ENCODE measurements at regions of chr5 and their contacts with region 1.

Region 1: DNA sequence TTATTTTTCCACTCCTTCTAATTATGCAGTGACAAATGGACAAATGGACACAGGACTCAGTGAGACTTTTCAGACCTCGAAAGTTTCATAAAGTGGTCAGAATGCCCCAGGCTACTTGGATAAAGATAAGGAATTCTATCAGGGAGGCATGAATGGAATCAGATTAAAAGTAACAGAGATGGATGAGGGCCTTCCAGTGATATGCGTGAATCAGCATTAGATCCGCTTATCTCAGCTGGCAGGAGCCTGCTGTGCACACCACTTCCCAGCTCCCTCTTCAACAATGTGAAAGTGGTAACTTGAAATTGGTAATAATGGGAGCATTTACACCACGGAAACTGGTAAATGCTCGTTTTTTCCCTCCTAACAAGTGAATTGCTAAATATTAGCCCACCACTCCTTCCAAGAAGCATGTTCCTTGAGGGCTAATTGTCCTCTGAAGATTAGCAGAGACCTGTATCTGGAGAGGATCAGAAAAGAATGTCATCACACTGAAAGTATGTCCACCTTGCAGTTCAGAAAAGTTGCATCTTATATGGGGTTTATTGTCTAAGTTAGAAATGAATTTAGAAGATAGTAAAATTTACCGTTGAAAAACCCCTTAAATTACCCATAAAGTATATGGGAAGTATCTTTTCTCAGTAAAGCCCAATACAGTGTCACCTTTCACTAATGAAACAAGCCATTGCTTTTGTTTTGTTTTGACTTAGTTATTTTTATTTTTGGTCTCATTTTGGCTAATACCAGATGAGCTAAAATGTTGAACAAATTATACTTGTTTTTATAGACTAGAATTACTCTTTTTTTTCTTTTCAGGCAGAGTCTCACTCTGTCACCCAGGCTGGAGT is 125.3 kb downstream of the DPYSL3 start:
- DNase-seq: no peak
- H3K4me3 ChIP-seq: no peak overlapping the region
- H3K27ac ChIP-seq: no peak overlapping the region
- H3K4me1 ChIP-seq: no peaks in the 10 kb centered on the region
- H3K27me3 ChIP-seq: no peaks in the 10 kb centered on the region
- CTCF ChIP-seq: no peak
- POLR2A ChIP-seq: no peak

Region 2: DNA sequence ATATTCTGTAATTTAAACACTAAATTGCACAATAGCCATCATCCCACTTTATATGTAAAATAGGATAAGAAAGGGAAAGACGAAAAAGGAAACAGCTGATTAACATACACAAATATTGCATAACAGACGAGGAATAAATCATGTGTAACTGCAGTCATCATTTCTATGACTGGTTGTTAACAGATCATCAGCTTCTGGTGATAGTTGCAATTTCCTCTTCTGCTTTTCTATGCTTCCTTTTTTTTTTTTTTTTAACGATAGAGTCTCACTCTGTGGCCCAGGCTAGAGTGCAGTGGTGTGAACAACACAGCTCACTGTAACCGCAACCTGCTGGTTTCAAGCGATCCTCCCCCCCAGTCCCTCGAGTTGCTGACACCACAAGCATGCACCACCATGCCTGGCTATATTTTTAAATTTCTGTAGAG is 420.5 kb after region 1 on chr5:
- intact Hi-C with region 1: loop called (anchors 5 kb)
- DNase-seq: no peak
- H3K4me3 ChIP-seq: no peak overlapping the region
- H3K27ac ChIP-seq: no peak overlapping the region
- H3K4me1 ChIP-seq: no peaks in the 10 kb centered on the region
- H3K27me3 ChIP-seq: no peaks in the 10 kb centered on the region
- CTCF ChIP-seq: no peak
- POLR2A ChIP-seq: no peak

Region 3: GRCh38 chr5:147918101-147918685 is 533.6 kb after region 1 on chr5:
- intact Hi-C with region 1: no loop called
- DNase-seq: no peak
- H3K4me3 ChIP-seq: no peak overlapping the region
- H3K27ac ChIP-seq: no peak overlapping the region
- H3K4me1 ChIP-seq: no peaks in the 10 kb centered on the region
- H3K27me3 ChIP-seq: no peaks in the 10 kb centered on the region
- CTCF ChIP-seq: no peak
- POLR2A ChIP-seq: no peak

Measured in breast epithelium (tissue), 4 donors.